ENCODE measurements at regions of chr1 and their contacts with region 1.

Region 1: GRCh38 chr1:3097861-3098260 is 28.9 kb downstream of the PRDM16 start:
- DNase-seq: no peak
- H3K4me3 ChIP-seq: no peak overlapping the region
- H3K27ac ChIP-seq: no peak overlapping the region
- H3K4me1 ChIP-seq: peaks cover 3% of the 10 kb centered on the region
- H3K27me3 ChIP-seq: no peaks in the 10 kb centered on the region
- CTCF ChIP-seq: no peak
- EP300 ChIP-seq: no peak
- POLR2A ChIP-seq: no peak

Region 2: GRCh38 chr1:3119725-3120124 is 21.9 kb after region 1 on chr1:
- intact Hi-C with region 1: loop called in 1 of 4 experiments (anchors 2 kb)
- DNase-seq: no peak
- H3K4me3 ChIP-seq: no peak overlapping the region
- H3K27ac ChIP-seq: peak overlapping the region in 1 of 2 donors; percentile 32
- H3K4me1 ChIP-seq: peaks cover 12% of the 10 kb centered on the region
- H3K27me3 ChIP-seq: no peaks in the 10 kb centered on the region
- CTCF ChIP-seq: no peak
- EP300 ChIP-seq: no peak
- POLR2A ChIP-seq: no peak